ENCODE measurements at regions of chr1 and their contacts with region 1.

Region 1: DNA sequence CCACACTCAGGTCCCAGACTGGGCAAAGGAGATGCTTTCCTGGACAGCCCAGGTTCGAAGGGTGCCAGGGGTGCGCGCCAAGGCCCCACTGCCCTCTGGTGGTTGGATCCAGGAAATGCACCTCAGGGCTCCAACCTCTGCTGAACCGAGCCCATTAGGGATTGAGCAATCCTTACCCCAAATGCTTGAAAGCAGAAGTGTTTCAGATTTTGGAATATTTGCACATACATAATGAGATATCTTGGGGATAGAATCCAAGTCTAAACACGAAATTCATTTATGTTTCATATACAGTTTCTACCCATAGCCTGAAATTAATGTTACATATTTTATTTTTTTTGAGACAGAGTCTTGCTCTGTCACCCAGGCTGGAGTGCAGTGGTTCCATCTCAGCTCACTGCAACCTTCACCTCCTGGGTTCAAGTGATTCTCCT is 57.4 kb downstream of the SLC9A1 start:
- DNase-seq: peak; percentile 71 to 91
- H3K4me3 ChIP-seq: no peak overlapping the region
- H3K27ac ChIP-seq: peak overlapping the region in 1 of 2 donors; percentile 79
- H3K4me1 ChIP-seq: peaks cover 0 to 32% (median 30%) of the 10 kb centered on the region in 4 donors
- H3K27me3 ChIP-seq: no peaks in the 10 kb centered on the region
- CTCF ChIP-seq: peak; percentile 98 to 99

Region 2: GRCh38 chr1:26993237-26994019 is 104.1 kb before region 1 on chr1 and contains the start of gene TRNP1:
- intact Hi-C with region 1: loop called (anchors 2 kb)
- DNase-seq: peak; percentile 58 to 79
- H3K4me3 ChIP-seq: peak within 1 kb of the TSS; percentile 66 to 91
- H3K27ac ChIP-seq: peak within 1 kb of the TSS; percentile 67 to 70
- H3K4me1 ChIP-seq: peaks cover 0 to 52% (median 34%) of the 10 kb centered on the region in 4 donors
- H3K27me3 ChIP-seq: peaks cover 0 to 24% of the 10 kb centered on the region in 2 donors
- CTCF ChIP-seq: no peak

Region 3: GRCh38 chr1:27044613-27045151 is 52.8 kb before region 1 on chr1:
- intact Hi-C with region 1: loop called (anchors 2 kb)
- DNase-seq: peak; percentile 90 to 91
- H3K4me3 ChIP-seq: peak overlapping the region; percentile 11 to 29
- H3K27ac ChIP-seq: no peak overlapping the region
- H3K4me1 ChIP-seq: peaks cover 0 to 10% (median 6%) of the 10 kb centered on the region in 4 donors
- H3K27me3 ChIP-seq: peaks cover 0 to 7% of the 10 kb centered on the region in 2 donors
- CTCF ChIP-seq: peak; percentile 98